CD4-positive, alpha-beta T cell (primary cell): ENCODE measurements at regions of chr19 and their contacts with region 1.

Region 1: DNA sequence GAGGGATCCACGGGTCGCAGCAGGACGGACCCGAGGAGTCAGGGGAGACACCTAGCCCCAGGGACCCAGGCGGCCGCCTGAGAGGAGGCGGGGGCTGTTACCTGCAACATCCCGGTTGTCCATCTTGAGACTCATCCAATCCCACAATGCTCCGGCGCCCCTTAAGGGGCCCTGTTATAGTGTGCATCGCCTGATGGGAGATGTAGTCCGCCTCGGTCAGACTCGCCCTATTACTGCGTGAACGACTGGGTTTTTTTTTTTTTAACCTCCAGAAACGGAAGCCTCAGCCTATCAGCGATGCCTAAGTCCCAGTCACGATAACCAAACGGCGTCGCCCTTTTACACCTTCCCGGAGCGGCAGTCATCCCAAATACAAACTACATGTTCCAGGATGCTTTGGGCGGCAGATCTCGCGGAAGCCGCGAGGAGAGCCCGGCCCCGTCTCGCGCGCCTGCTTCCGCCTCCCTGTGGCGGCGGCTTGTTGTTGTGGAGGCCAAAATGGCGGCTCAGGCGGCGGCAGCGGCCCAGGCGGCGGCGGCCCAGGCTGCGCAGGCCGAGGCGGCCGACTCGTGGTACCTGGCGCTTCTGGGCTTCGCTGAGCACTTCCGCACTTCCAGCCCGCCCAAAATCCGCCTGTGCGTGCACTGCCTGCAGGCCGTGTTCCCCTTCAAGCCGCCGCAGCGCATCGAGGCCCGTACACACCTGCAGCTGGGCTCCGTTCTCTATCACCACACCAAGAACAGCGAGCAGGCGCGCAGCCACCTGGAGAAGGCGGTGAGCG is at the starts of genes MAU2 and SUGP1:
- DNase-seq: peak; percentile 81 to 96 (median 88)
- ATAC-seq: peak; percentile 88
- H3K4me3 ChIP-seq: peak within 1 kb of the TSS; percentile 71
- H3K4me3 Mint-ChIP-seq: peak within 1 kb of the TSS; percentile 100
- H3K27ac ChIP-seq: peak within 1 kb of the TSS; percentile 92 to 95
- H3K27ac Mint-ChIP-seq: peak within 1 kb of the TSS; percentile 99
- H3K4me1 ChIP-seq: peaks cover 57% of the 10 kb centered on the region
- H3K4me1 Mint-ChIP-seq: peaks cover 43% of the 10 kb centered on the region
- H3K27me3 ChIP-seq: no peaks in the 10 kb centered on the region
- H3K27me3 Mint-ChIP-seq: no peaks in the 10 kb centered on the region
- CTCF ChIP-seq: peak; percentile 16
- total RNA-seq, gene MAU2: 132 to 133 TPM
- total RNA-seq, gene SUGP1: 49.7 to 56.0 TPM

Region 2: GRCh38 chr19:19033426-19034203 is 286.9 kb before region 1 on chr19 and contains the starts of genes ARMC6 and SUGP2:
- CTCF ChIA-PET with region 1: no interaction called
- POLR2A ChIA-PET with region 1: no interaction called
- intact Hi-C with region 1: loop called in 1 of 2 experiments (anchors 5 kb)
- DNase-seq: peak; percentile 77 to 96 (median 87)
- ATAC-seq: peak; percentile 71
- H3K4me3 ChIP-seq: peak within 1 kb of the TSS; percentile 86
- H3K4me3 Mint-ChIP-seq: peak within 1 kb of the TSS; percentile 99
- H3K27ac ChIP-seq: peak within 1 kb of the TSS; percentile 77 to 81
- H3K27ac Mint-ChIP-seq: peak within 1 kb of the TSS; percentile 88
- H3K4me1 ChIP-seq: peaks cover 42% of the 10 kb centered on the region
- H3K4me1 Mint-ChIP-seq: peaks cover 38% of the 10 kb centered on the region
- H3K27me3 ChIP-seq: no peaks in the 10 kb centered on the region
- H3K27me3 Mint-ChIP-seq: no peaks in the 10 kb centered on the region
- CTCF ChIP-seq: no peak
- total RNA-seq, gene ARMC6: 5.9 to 6.0 TPM
- total RNA-seq, gene SUGP2: 106 to 110 TPM

Region 3: DNA sequence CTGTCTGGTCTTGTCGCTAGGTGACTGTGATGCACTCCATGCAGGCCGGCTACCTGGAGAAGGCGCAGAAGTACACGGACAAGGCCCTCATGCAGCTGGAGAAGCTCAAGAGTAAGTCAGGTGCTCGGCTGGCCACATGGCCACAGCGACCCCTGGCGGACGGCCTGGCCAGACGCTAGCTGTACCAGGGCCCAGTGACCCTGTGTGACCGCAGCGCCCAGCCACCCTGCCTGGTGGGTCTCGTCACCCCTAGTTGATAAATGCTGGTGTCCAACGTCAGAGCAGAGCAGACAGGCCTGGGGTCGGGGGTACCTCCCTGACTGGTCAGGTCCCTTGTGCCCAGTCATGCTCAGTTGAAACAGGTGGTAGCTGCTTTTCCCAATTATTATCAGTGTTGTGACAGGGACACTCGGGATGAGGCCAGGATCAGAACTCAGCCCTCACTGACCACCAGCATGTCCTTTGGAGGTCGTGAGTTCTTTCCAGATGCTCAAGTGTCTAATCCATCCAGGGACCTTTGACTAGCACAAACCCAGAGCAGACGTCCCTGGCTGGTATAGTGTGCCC is 22.3 kb after region 1 on chr19:
- CTCF ChIA-PET with region 1: no interaction called
- POLR2A ChIA-PET with region 1: no interaction called
- intact Hi-C with region 1: no loop called
- DNase-seq: peak in 1 of 14 experiments; percentile 34
- ATAC-seq: no peak
- H3K4me3 ChIP-seq: no peak overlapping the region
- H3K4me3 Mint-ChIP-seq: no peak overlapping the region
- H3K27ac ChIP-seq: no peak overlapping the region
- H3K27ac Mint-ChIP-seq: no peak overlapping the region
- H3K4me1 ChIP-seq: no peaks in the 10 kb centered on the region
- H3K4me1 Mint-ChIP-seq: no peaks in the 10 kb centered on the region
- H3K27me3 ChIP-seq: no peaks in the 10 kb centered on the region
- H3K27me3 Mint-ChIP-seq: no peaks in the 10 kb centered on the region
- CTCF ChIP-seq: no peak

Region 4: GRCh38 chr19:19355606-19356139 is 35.1 kb after region 1 on chr19:
- CTCF ChIA-PET with region 1: no interaction called
- POLR2A ChIA-PET with region 1: no interaction called
- intact Hi-C with region 1: loop called in 1 of 2 experiments (anchors 2 kb)
- DNase-seq: no peak
- ATAC-seq: no peak
- H3K4me3 ChIP-seq: no peak overlapping the region
- H3K4me3 Mint-ChIP-seq: no peak overlapping the region
- H3K27ac ChIP-seq: no peak overlapping the region
- H3K27ac Mint-ChIP-seq: no peak overlapping the region
- H3K4me1 ChIP-seq: peaks cover 12% of the 10 kb centered on the region
- H3K4me1 Mint-ChIP-seq: peaks cover 20% of the 10 kb centered on the region
- H3K27me3 ChIP-seq: no peaks in the 10 kb centered on the region
- H3K27me3 Mint-ChIP-seq: no peaks in the 10 kb centered on the region
- CTCF ChIP-seq: no peak

Region 5: DNA sequence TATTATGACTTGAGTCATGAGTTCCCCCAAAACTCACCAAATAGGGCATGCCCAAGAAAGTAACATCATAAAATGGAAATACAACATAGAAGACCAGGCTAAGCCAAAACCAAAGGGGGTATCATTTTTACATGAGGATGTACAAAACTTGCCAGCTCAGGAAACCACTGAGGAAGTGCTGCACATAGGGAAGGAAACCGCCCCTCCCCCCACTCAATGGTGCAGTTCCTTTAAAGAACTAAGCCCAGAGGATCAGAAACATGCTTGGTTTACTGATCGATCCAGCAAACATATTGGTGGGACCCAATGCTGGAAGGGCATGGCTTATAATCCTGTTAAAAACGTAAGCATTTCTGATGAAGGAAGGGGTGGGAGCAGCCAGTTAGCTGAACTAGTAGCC is 842.3 kb after region 1 on chr19:
- CTCF ChIA-PET with region 1: no interaction called
- POLR2A ChIA-PET with region 1: no interaction called
- intact Hi-C with region 1: no loop called
- DNase-seq: peak in 3 of 14 experiments; percentile 29 to 62 (median 61)
- ATAC-seq: no peak
- H3K4me3 ChIP-seq: no peak overlapping the region
- H3K4me3 Mint-ChIP-seq: peak overlapping the region; percentile 45
- H3K27ac ChIP-seq: no peak overlapping the region
- H3K27ac Mint-ChIP-seq: no peak overlapping the region
- H3K4me1 ChIP-seq: peaks cover 10% of the 10 kb centered on the region
- H3K4me1 Mint-ChIP-seq: peaks cover 40% of the 10 kb centered on the region
- H3K27me3 ChIP-seq: no peaks in the 10 kb centered on the region
- H3K27me3 Mint-ChIP-seq: no peaks in the 10 kb centered on the region
- CTCF ChIP-seq: no peak